Psoas muscle (tissue), 8 donors: ENCODE measurements at regions of chr1 and their contacts with region 1.

Region 1: DNA sequence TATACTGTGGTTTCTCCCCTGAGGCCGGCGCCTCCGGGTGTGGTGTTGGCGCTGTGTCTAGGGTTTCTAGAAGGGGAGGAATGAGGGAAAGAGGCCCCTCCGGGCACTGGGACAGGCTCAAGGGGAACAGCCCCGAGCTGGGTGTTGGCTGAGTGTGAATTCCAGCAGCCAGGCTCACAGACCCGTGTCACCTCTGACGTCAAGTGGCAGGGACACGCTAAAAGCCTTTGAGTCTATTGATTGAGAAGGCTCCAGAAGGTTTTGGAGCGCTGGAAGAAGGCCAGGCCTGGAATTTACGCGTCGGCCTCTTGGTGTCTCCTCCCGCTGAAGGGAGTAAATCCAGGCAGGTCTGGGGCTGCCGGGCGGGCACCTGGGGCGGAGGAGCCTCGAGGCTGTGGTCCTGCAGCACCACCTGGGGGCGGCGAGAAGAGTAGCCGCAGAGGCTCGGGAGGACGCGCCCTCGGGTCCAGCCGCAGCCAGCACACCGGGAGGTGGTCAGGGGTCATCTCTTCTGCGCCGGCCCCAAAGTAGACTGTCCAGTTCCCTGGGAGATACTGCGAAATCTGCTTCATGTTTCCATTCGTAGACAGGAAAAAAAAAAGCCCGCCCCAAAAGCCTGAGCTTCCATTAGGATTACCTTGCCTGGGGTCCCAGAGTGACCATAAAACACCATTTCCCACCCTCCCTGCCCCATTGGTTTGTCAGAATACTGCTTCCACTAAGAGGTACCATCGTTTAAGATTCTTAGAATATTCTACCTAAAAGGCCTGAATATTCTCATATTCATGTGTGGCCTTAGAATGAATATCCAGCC is 61.7 kb downstream of the TLR5 start:
- DNase-seq: peak; percentile 79 to 91
- ATAC-seq: peak; percentile 96 to 99 (median 98)
- H3K4me3 ChIP-seq: peak overlapping the region; percentile 55
- H3K27ac ChIP-seq: peak overlapping the region; percentile 51
- H3K4me1 ChIP-seq: no peaks in the 10 kb centered on the region
- H3K27me3 ChIP-seq: no peaks in the 10 kb centered on the region
- CTCF ChIP-seq: peak; percentile 96

Region 2: DNA sequence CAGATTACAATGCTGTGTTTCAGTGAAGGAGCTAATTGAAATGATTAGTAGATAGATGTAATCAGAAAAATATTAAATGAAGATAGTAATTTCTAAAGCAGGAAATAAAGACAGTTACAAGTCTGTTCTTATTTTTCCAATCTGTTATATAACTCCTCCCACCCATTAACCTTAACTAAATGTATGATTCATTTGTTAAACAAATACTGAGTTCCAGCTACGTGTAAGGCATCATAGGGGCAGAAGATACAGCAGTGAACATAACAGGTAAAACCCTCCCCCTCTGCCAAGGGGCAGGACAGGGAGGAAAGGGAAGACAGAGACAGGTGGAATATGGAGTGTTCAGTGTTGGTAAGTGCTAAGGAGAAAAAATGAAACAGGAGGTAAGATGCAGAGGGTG is 344.4 kb before region 1 on chr1 and contains the start of gene FAM177B:
- intact Hi-C with region 1: loop called (anchors 2 to 5 kb)
- DNase-seq: no peak
- ATAC-seq: no peak
- H3K4me3 ChIP-seq: no peak within 1 kb of the TSS
- H3K27ac ChIP-seq: no peak within 1 kb of the TSS
- H3K4me1 ChIP-seq: no peaks in the 10 kb centered on the region
- H3K27me3 ChIP-seq: no peaks in the 10 kb centered on the region
- CTCF ChIP-seq: no peak
- total RNA-seq, gene FAM177B: not detected

Region 3: GRCh38 chr1:223216531-223217205 is 135.3 kb after region 1 on chr1:
- intact Hi-C with region 1: no loop called
- DNase-seq: no peak
- ATAC-seq: no peak
- H3K4me3 ChIP-seq: no peak overlapping the region
- H3K27ac ChIP-seq: no peak overlapping the region
- H3K4me1 ChIP-seq: no peaks in the 10 kb centered on the region
- H3K27me3 ChIP-seq: no peaks in the 10 kb centered on the region
- CTCF ChIP-seq: no peak